Calu3 (cell line): ENCODE measurements at regions of chr7 and their contacts with region 1.

Region 1: DNA sequence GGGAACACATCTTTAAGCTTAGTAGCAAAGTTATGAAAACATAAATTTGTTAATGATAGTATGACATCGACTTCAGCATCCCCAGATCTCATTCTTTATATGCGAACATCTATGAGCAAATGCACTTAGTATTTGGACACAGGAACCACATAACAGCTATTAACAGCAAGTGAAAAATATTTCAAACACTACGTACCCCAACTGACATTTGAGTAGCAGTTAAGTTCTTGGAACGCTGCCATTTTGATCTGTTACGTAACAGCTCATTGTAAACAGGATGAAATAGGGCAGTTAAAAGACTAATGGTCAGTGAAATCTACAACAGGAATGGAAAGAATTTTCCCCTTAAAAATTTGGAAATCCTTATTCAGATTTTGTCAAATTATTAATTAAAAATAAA is 428.8 kb downstream of the TNS3 start:
- DNase-seq: peak; percentile 73
- H3K4me3 Mint-ChIP-seq: peak overlapping the region; percentile 47
- H3K27ac Mint-ChIP-seq: peak overlapping the region; percentile 80
- H3K4me1 Mint-ChIP-seq: peaks cover 51% of the 10 kb centered on the region
- H3K27me3 Mint-ChIP-seq: no peaks in the 10 kb centered on the region
- CTCF ChIP-seq: no peak

Region 2: GRCh38 chr7:46544374-46545008 is 608.6 kb before region 1 on chr7:
- CTCF ChIA-PET with region 1: no interaction called
- intact Hi-C with region 1: loop called (anchors 5 kb)
- DNase-seq: no peak
- H3K4me3 Mint-ChIP-seq: no peak overlapping the region
- H3K27ac Mint-ChIP-seq: peak overlapping the region; percentile 70
- H3K4me1 Mint-ChIP-seq: peaks cover 53% of the 10 kb centered on the region
- H3K27me3 Mint-ChIP-seq: no peaks in the 10 kb centered on the region
- CTCF ChIP-seq: no peak

Region 3: GRCh38 chr7:47254081-47255006 is 101.3 kb after region 1 on chr7:
- CTCF ChIA-PET with region 1: no interaction called
- intact Hi-C with region 1: no loop called
- DNase-seq: peak; percentile 90
- H3K4me3 Mint-ChIP-seq: peak overlapping the region; percentile 69
- H3K27ac Mint-ChIP-seq: peak overlapping the region; percentile 32
- H3K4me1 Mint-ChIP-seq: peaks cover 9% of the 10 kb centered on the region
- H3K27me3 Mint-ChIP-seq: peaks cover 32% of the 10 kb centered on the region
- CTCF ChIP-seq: peak; percentile 99